Transverse colon (tissue), 4 donors: ENCODE measurements at regions of chr2 and their contacts with region 1.

Region 1: GRCh38 chr2:217632043-217632442 is 370.8 kb downstream of the TNS1 start:
- DNase-seq: peak; percentile 44
- H3K4me3 ChIP-seq: no peak overlapping the region
- H3K27ac ChIP-seq: peak overlapping the region in 3 of 4 donors; percentile 40 to 64 (median 56)
- H3K4me1 ChIP-seq: peaks cover 0 to 29% (median 4%) of the 10 kb centered on the region in 4 donors
- H3K27me3 ChIP-seq: no peaks in the 10 kb centered on the region
- CTCF ChIP-seq: no peak
- EP300 ChIP-seq: no peak
- POLR2A ChIP-seq: no peak

Region 2: GRCh38 chr2:217672491-217672900 is 40.5 kb after region 1 on chr2:
- in situ Hi-C with region 1: no loop called
- intact Hi-C with region 1: no loop called
- DNase-seq: no peak
- H3K4me3 ChIP-seq: no peak overlapping the region
- H3K27ac ChIP-seq: no peak overlapping the region
- H3K4me1 ChIP-seq: peaks cover 0 to 4% (median 0%) of the 10 kb centered on the region in 4 donors
- H3K27me3 ChIP-seq: no peaks in the 10 kb centered on the region
- CTCF ChIP-seq: no peak
- EP300 ChIP-seq: no peak
- POLR2A ChIP-seq: no peak

Region 3: DNA sequence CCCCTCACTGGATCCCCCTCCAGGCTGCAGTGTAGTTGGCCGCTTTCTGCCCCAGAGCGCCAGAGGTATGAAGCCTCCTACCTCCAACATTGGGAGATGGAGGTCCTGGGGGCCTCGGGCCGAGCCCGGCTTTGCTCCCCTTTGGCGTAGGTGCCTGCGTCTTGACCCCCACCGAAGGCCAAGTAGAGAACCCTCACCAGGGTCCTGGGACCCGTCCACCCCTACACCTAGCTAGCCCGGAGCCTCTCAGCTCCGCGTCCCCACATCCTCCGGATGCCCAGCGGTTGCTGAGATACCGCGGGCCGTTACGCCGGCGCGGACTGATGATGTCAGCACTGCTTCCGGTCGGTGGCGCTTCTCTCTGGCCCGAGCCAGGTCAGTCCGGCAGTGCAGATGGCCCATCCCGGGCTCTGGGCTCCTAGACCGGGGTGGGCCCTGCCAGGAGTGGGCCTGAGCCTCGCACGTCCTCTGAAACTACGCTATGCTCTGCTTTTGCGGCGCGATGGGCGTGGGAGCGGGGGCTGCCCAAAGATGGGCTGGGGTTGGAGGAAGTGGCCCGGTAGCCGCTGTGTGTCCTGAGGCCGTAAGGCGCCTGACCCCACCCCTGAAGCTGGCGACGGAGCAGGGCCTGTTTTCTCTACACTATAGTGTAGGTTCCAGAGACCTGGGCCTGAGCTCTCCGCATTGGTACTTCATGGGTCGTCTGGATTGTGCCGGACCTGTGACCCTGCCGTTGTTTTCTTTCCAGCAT is 1613.3 kb after region 1 on chr2 and contains the starts of genes GLB1L and STK16:
- in situ Hi-C with region 1: no loop called
- intact Hi-C with region 1: loop called (anchors 10 kb)
- DNase-seq: peak; percentile 96
- H3K4me3 ChIP-seq: peak within 1 kb of the TSS; percentile 65 to 95 (median 83)
- H3K27ac ChIP-seq: peak within 1 kb of the TSS; percentile 94 to 97 (median 94)
- H3K4me1 ChIP-seq: peaks cover 32 to 53% (median 49%) of the 10 kb centered on the region in 4 donors
- H3K27me3 ChIP-seq: no peaks in the 10 kb centered on the region
- CTCF ChIP-seq: no peak
- EP300 ChIP-seq: peak; percentile 52
- POLR2A ChIP-seq: peak; percentile 91
- total RNA-seq, gene GLB1L: 0.40 to 9.1 (median 3.8) TPM
- total RNA-seq, gene STK16: 18.7 to 44.8 (median 28.2) TPM

Region 4: DNA sequence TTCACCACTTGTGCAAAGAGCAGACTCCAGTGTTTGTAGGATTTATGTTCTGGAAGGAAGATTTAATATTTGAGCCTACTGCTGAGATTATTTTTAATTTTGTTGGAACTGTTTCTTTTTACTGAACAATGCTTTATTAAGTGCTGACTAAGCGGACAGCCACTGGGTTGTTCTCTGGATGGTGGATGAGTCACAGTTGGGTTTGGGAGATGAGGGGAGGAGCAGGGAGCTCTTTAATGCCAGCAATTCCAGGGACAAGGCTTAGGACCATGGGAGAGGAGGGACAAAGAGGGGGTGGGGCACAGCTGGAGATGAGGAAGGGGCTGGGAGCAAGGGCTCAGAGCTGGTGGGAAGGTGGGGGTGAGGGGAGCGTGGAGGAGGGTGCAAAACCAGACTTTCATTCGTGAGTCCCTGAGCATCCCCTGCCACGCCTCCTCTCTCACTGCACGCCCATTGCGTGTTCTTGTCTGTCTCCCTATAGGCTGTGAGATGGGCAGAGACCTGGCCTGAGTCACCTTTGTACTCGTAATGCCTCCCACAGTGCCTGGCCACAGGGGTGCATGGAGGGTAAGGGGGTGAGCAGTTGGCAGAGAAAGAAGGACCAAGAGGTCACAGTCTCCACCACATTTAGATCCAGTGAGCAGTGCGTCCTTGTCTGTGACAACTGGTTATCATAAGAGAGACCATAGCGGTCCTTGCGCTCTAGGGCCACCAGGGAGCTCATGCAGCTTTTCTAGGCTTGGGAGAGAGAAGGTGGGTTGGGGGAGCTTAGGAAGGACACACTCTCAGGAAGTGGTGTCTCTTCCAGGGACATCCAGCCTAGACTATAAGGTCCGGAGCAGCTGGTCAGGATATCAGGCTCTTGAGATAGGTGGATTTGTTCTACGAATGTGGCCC is 2013.8 kb after region 1 on chr2:
- in situ Hi-C with region 1: no loop called
- intact Hi-C with region 1: no loop called
- DNase-seq: no peak
- H3K4me3 ChIP-seq: no peak overlapping the region
- H3K27ac ChIP-seq: no peak overlapping the region
- H3K4me1 ChIP-seq: peaks cover 0 to 12% (median 1%) of the 10 kb centered on the region in 4 donors
- H3K27me3 ChIP-seq: peaks cover 22% of the 10 kb centered on the region
- CTCF ChIP-seq: no peak
- EP300 ChIP-seq: no peak
- POLR2A ChIP-seq: no peak